Naive thymus-derived CD8-positive, alpha-beta T cell (primary cell): ENCODE measurements at regions of chr6 and their contacts with region 1.

Region 1: GRCh38 chr6:30061092-30061857 is at the start of gene POLR1H:
- DNase-seq: peak; percentile 70 to 93 (median 85)
- ATAC-seq: peak; percentile 87 to 93
- H3K4me3 Mint-ChIP-seq: peak within 1 kb of the TSS; percentile 87 to 100 (median 99)
- H3K27ac Mint-ChIP-seq: peak within 1 kb of the TSS; percentile 97 to 100 (median 99)
- H3K4me1 Mint-ChIP-seq: peaks cover 17 to 54% (median 34%) of the 10 kb centered on the region in 4 donors
- H3K27me3 Mint-ChIP-seq: no peaks in the 10 kb centered on the region
- polyA plus RNA-seq, gene POLR1H: 60.8 to 110 (median 93.5) TPM

Region 2: GRCh38 chr6:30075161-30075986 is 14.1 kb after region 1 on chr6 and contains the start of gene RNF39:
- POLR2A ChIA-PET with region 1: interaction called, 16 read pairs
- DNase-seq: peak in 4 of 10 donors; percentile 21 to 31 (median 24)
- ATAC-seq: peak; percentile 48 to 49
- H3K4me3 Mint-ChIP-seq: peak within 1 kb of the TSS; percentile 58 to 87 (median 76)
- H3K27ac Mint-ChIP-seq: peak within 1 kb of the TSS in 5 of 10 donors; percentile 22 to 61 (median 41)
- H3K4me1 Mint-ChIP-seq: peaks cover 38 to 59% (median 49%) of the 10 kb centered on the region in 4 donors
- H3K27me3 Mint-ChIP-seq: peaks cover 37 to 83% (median 66%) of the 10 kb centered on the region in 5 donors
- polyA plus RNA-seq, gene RNF39: 0.10 TPM in 1 of 3 donors, not detected in the others

Region 3: GRCh38 chr6:30212865-30213666 is 151.8 kb after region 1 on chr6 and contains the start of gene TRIM26:
- POLR2A ChIA-PET with region 1: interaction called, 17 read pairs
- DNase-seq: peak; percentile 88 to 99 (median 97)
- ATAC-seq: peak; percentile 88 to 89
- H3K4me3 Mint-ChIP-seq: peak within 1 kb of the TSS; percentile 92 to 100 (median 96)
- H3K27ac Mint-ChIP-seq: peak within 1 kb of the TSS; percentile 93 to 100 (median 99)
- H3K4me1 Mint-ChIP-seq: peaks cover 39 to 62% (median 59%) of the 10 kb centered on the region in 4 donors
- H3K27me3 Mint-ChIP-seq: no peaks in the 10 kb centered on the region
- polyA plus RNA-seq, gene TRIM26: 22.7 to 42.9 (median 27.6) TPM